ENCODE measurements at regions of chr12 and their contacts with region 1.

Region 1: GRCh38 chr12:48957141-48958048 is at the start of gene ARF3:
- DNase-seq: peak; percentile 82 to 95
- H3K4me3 ChIP-seq: peak within 1 kb of the TSS; percentile 69
- H3K27ac ChIP-seq: peak within 1 kb of the TSS; percentile 33
- H3K4me1 ChIP-seq: peaks cover 24% of the 10 kb centered on the region
- H3K27me3 ChIP-seq: no peaks in the 10 kb centered on the region
- CTCF ChIP-seq: no peak
- total RNA-seq, gene ARF3: 200 and 205 TPM in 2 replicates

Region 2: DNA sequence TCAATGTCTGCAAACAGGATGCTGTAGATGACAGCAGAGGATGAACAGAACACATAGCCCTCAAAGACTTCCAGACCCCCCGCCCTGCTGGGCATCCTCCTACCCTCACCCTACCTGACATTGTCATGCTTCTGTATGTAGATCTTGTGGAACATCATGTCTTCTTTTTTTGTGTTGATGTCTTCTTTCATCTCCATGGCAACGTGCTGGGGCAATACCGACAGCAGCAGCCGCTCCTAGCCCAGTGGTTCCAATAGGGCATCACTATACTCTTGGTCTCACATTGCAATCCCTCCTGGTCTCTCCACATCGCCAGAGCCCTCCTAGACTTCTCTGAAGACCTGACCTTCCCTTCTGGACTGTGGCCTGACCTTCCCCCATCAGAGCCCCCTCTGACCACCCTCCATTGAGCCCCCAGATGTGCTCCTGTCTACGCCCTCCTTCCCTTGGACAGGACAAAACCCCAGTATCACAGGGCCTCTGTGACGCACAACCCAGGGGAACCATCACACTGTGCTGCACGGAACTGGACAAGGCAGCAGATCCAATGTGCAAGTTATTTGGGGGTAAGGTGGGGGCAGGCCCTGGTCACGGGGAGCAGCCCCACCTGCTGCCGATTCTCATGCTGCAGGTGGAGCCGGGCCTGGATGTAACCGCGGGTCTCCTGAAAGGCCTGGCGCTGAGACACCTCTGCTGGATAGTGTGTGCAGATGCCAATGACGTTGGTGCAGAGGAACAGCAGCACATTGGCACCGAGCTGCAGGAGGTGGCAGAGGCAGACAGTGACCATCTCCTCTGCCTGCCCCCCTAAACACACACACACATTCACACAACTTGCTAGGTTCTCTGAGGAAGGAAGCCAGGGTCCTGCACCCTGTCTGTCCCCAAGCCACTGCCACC is 179.6 kb before region 1 on chr12:
- CTCF ChIA-PET with region 1: no interaction called
- POLR2A ChIA-PET with region 1: no interaction called
- intact Hi-C with region 1: no loop called
- DNase-seq: no peak
- H3K4me3 ChIP-seq: no peak overlapping the region
- H3K27ac ChIP-seq: no peak overlapping the region
- H3K4me1 ChIP-seq: peaks cover 31% of the 10 kb centered on the region
- H3K27me3 ChIP-seq: no peaks in the 10 kb centered on the region
- CTCF ChIP-seq: no peak

Region 3: GRCh38 chr12:48857278-48857994 is 100.0 kb before region 1 on chr12:
- CTCF ChIA-PET with region 1: interaction called, 7 read pairs
- POLR2A ChIA-PET with region 1: interaction called, 21 read pairs
- intact Hi-C with region 1: no loop called
- DNase-seq: no peak
- H3K4me3 ChIP-seq: no peak overlapping the region
- H3K27ac ChIP-seq: no peak overlapping the region
- H3K4me1 ChIP-seq: peaks cover 22% of the 10 kb centered on the region
- H3K27me3 ChIP-seq: no peaks in the 10 kb centered on the region
- CTCF ChIP-seq: no peak

Region 4: DNA sequence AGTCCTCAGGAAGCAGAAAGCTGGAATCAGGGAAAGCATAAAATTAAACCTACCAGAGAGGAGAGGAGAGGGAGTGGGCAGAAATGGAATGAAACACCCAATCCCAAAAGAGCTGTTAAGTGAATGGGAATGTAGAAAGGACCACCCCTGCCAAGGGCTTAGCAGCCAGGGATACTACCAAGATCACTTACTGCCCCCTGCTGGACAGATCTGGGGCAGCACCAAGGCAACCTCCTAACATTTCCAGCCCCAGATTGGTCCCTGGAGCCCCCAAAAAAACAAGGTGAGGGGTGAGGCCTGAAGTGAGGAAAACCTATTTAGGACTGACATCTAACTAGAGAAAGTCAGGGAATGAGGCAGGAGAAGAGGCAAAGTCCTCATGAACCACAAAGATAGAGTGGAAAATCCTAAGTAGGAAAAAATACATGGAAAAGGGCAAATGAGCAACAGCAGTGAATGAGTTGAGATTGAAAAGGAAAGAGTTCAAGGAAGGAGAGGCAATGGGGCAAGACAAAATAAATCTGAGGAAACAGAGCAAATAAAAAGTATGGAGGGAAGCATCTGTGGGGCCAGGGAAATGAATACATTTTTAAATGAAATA is 20.9 kb before region 1 on chr12:
- CTCF ChIA-PET with region 1: interaction called, 11 read pairs
- POLR2A ChIA-PET with region 1: no interaction called
- intact Hi-C with region 1: no loop called
- DNase-seq: peak in 1 of 2 experiments; percentile 62
- H3K4me3 ChIP-seq: no peak overlapping the region
- H3K27ac ChIP-seq: no peak overlapping the region
- H3K4me1 ChIP-seq: no peaks in the 10 kb centered on the region
- H3K27me3 ChIP-seq: no peaks in the 10 kb centered on the region
- CTCF ChIP-seq: peak; percentile 94